Adrenal gland (tissue), 19 donors: ENCODE measurements at regions of chr20 and their contacts with region 1.

Region 1: DNA sequence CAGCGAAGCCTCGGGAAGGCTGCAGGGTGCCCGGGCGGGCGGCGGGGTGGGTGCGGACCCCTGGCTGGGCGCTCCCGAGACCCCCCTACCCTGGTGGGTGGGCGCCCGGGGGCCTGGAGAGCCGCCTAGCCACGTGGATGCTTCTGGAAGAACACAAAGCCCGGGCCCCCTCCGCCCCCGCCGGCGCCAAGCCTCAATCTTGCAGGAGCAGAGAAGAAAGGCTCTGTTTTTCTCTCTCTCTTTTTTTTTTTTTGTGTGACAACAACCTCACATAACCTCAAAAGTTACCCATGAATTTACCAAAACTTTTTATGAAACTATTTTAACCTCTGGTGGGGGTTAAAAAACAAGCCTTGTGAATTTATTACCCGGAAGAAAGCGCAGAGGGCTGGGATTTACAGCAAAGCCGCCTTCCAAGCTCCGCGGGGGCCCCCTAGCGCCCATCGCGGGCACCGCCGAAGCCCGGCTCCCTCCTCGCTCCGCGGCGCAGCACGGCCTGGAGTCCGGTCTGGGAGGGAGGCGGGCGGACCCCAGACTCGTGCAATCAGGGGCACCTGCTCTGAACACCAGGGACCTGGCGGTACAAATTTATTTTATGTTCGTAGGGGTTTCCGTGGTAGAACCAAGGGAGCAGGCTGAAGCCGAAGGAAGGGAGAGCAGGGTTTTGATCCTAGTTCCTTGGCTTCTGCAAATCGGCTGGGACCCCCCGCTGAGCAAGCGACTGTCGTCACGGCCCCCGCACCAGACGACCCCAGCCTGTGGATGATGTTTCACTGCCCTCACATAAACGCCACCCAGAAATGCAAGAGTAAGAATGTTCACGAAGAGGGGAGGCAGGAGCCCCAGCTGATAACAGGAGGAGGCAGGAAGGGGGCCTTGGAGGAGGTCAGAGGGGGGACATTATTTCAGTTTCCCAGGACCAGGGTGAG is 58.9 kb downstream of the ZNF831 start:
- DNase-seq: peak; percentile 61 to 88 (median 80)
- H3K4me3 ChIP-seq: peak overlapping the region in 2 of 4 donors; percentile 33 to 71
- H3K27ac ChIP-seq: peak overlapping the region in 2 of 5 donors; percentile 15 to 28
- H3K4me1 ChIP-seq: peaks cover 6 to 22% of the 10 kb centered on the region in 2 donors
- H3K27me3 ChIP-seq: peaks cover 26% of the 10 kb centered on the region
- CTCF ChIP-seq: peak; percentile 74 to 94 (median 85)
- POLR2A ChIP-seq: no peak

Region 2: DNA sequence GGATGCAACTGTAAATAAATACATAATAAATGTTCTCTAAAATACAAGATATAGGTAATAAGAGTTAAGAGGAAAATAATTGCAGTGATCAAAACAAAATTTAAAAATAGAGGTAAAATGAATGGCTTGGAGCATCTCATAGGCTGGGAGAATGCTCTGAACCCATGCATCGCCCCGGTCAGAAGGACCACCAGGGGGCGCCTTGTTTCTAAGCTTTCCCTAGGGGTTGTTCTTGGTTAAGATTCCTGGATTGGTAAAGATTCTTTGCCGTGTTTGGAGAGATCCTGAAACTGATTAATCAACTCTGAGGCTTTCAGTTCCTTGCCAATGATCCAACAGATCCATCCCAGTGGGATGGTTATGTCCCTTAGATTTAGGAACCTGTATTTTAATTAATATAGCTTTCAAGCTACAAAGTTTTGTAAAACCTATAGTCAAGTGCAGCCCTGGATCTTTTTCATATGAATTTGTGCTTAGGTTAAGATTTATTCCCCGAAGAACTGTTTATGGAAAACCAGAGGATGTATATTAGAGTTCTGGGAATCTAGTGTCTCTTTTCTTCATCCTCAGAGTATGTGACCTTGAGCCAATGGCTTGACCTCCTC is 134.6 kb before region 1 on chr20:
- intact Hi-C with region 1: loop called (anchors 5 to 10 kb)
- DNase-seq: peak; percentile 72 to 93 (median 81)
- H3K4me3 ChIP-seq: no peak overlapping the region
- H3K27ac ChIP-seq: no peak overlapping the region
- H3K4me1 ChIP-seq: no peaks in the 10 kb centered on the region
- H3K27me3 ChIP-seq: no peaks in the 10 kb centered on the region
- CTCF ChIP-seq: peak; percentile 63 to 95 (median 82)
- POLR2A ChIP-seq: no peak

Region 3: DNA sequence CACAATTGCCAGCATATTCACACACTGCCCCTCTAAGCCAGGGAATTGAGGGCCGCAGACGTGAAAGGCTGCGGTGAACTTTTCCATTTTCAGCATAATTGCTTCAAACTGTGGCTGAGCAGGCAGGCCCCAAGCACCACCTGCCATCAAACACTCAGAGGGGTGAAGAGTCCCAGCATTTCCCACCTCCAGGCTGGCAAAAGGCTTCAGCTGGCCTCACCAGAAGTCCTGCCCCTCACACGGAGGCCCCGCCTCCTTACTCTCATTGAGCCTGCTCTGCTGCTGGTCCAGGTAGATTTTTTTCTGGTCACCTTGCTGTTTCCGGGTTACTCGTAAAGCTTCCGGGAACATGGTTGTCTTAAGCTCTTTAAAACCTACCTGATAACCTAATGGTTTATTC is 127.9 kb before region 1 on chr20:
- intact Hi-C with region 1: loop called (anchors 5 to 10 kb)
- DNase-seq: no peak
- H3K4me3 ChIP-seq: no peak overlapping the region
- H3K27ac ChIP-seq: no peak overlapping the region
- H3K4me1 ChIP-seq: no peaks in the 10 kb centered on the region
- H3K27me3 ChIP-seq: no peaks in the 10 kb centered on the region
- CTCF ChIP-seq: no peak
- POLR2A ChIP-seq: no peak